ENCODE measurements at regions of chr1 and their contacts with region 1.

Region 1: GRCh38 chr1:119475866-119476439 is 31.1 kb upstream of the HSD3B1 start:
- DNase-seq: peak; percentile 50 to 64 (median 60)
- ATAC-seq: peak; percentile 97
- H3K4me3 ChIP-seq: no peak overlapping the region
- H3K27ac ChIP-seq: no peak overlapping the region
- H3K4me1 ChIP-seq: no peaks in the 10 kb centered on the region
- H3K27me3 ChIP-seq: no peaks in the 10 kb centered on the region
- CTCF ChIP-seq: peak; percentile 69 to 79 (median 78)
- EP300 ChIP-seq: no peak
- POLR2A ChIP-seq: no peak
- RAD21 ChIP-seq: peak; percentile 37 to 59; a peak in 3 of 4 replicates

Region 2: DNA sequence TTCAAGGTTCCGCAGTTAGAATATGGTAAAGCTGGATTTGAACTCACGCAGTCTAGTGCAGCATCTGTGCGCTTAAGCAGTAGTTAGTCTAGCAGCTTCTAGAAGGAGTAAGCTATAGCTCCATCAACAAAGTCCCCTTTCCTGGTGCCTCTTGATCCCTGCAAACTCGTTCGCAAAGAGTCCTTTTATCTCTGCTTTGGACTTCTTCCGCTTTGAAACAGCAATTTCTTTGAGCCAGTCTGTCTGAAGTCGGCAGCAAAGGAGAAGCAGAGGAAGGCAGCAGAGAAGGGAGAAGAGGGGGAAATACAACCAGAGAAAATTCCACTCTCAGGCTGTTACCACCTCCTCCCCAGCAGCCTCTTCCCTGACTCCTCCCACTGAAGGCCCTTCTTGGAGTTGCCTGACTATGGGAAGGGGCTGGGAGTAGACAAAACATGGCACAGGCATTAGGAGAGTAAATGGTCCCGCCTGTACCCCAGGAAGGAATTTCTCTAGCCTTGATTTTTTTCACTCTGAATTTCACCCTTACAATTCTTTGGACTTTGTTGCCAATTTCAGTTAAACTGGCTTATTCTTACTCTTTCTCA is 35.1 kb before region 1 on chr1:
- CTCF ChIA-PET with region 1: no interaction called
- POLR2A ChIA-PET with region 1: interaction called, 3 read pairs
- in situ Hi-C with region 1: no loop called
- intact Hi-C with region 1: loop called (anchors 5 kb)
- DNase-seq: no peak
- ATAC-seq: no peak
- H3K4me3 ChIP-seq: no peak overlapping the region
- H3K27ac ChIP-seq: no peak overlapping the region
- H3K4me1 ChIP-seq: no peaks in the 10 kb centered on the region
- H3K27me3 ChIP-seq: 0 out of 5 replicates have a peak, but pooled peaks cover 0 to 2% of the 10 kb centered on the region in 2 experiments
- CTCF ChIP-seq: no peak
- EP300 ChIP-seq: no peak
- POLR2A ChIP-seq: no peak
- RAD21 ChIP-seq: no peak

Region 3: GRCh38 chr1:119516678-119517077 is 40.7 kb after region 1 on chr1:
- CTCF ChIA-PET with region 1: no interaction called
- POLR2A ChIA-PET with region 1: no interaction called
- in situ Hi-C with region 1: no loop called
- intact Hi-C with region 1: no loop called
- DNase-seq: no peak
- ATAC-seq: no peak
- H3K4me3 ChIP-seq: no peak overlapping the region
- H3K27ac ChIP-seq: no peak overlapping the region
- H3K4me1 ChIP-seq: no peaks in the 10 kb centered on the region
- H3K27me3 ChIP-seq: no peaks in the 10 kb centered on the region
- CTCF ChIP-seq: no peak
- EP300 ChIP-seq: no peak
- POLR2A ChIP-seq: no peak
- RAD21 ChIP-seq: no peak

Region 4: DNA sequence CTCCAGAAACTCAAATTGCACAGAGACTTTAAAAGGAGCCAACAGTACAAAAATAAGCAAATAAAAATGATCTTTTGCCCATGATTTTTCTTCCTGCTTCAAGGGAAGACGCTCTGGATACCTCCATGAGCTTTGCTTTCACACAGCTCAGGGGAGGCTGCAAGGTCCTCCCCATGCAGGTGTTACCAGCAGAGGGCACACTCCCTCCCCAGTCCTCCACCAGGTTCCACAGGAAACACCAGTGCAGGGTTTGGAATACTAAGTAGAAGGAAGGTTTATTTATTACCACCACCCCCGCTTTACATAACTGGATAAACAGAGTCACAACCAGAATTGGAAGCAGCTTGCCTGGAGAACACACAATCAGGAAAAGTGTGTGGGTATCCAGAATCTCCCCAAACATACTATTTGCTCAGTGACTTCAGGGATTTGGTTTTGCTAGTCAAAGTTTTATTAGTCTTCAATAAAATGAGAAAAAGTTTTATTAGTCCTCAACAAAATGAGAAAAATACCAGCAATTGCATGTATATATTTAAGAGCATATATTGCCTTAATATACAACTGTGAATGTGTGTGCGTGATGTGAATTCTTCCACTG is 68.3 kb after region 1 on chr1:
- CTCF ChIA-PET with region 1: no interaction called
- POLR2A ChIA-PET with region 1: no interaction called
- in situ Hi-C with region 1: no loop called
- intact Hi-C with region 1: loop called (anchors 5 kb)
- DNase-seq: peak; percentile 16 to 41 (median 20)
- ATAC-seq: peak; percentile 91
- H3K4me3 ChIP-seq: no peak overlapping the region
- H3K27ac ChIP-seq: no peak overlapping the region
- H3K4me1 ChIP-seq: no peaks in the 10 kb centered on the region
- H3K27me3 ChIP-seq: no peaks in the 10 kb centered on the region
- CTCF ChIP-seq: peak; percentile 60 to 76 (median 60)
- EP300 ChIP-seq: no peak
- POLR2A ChIP-seq: no peak
- RAD21 ChIP-seq: 0 out of 4 replicates have a peak, but pooled peaks of 1 of the 2 experiments have one; percentile 16

Region 5: GRCh38 chr1:119603695-119604094 is 127.7 kb after region 1 on chr1:
- CTCF ChIA-PET with region 1: no interaction called
- POLR2A ChIA-PET with region 1: no interaction called
- in situ Hi-C with region 1: no loop called
- intact Hi-C with region 1: loop called (anchors 10 kb)
- DNase-seq: no peak
- ATAC-seq: no peak
- H3K4me3 ChIP-seq: no peak overlapping the region
- H3K27ac ChIP-seq: no peak overlapping the region
- H3K4me1 ChIP-seq: no peaks in the 10 kb centered on the region
- H3K27me3 ChIP-seq: peaks cover 5 to 16% of the 10 kb centered on the region in 2 experiments; a peak in 3 of 5 replicates
- CTCF ChIP-seq: no peak
- EP300 ChIP-seq: no peak
- POLR2A ChIP-seq: no peak
- RAD21 ChIP-seq: no peak

Region 6: GRCh38 chr1:119675349-119676345 is 199.7 kb after region 1 on chr1:
- CTCF ChIA-PET with region 1: no interaction called
- POLR2A ChIA-PET with region 1: no interaction called
- in situ Hi-C with region 1: no loop called
- intact Hi-C with region 1: loop called (anchors 10 kb)
- DNase-seq: peak; percentile 85 to 91 (median 86)
- ATAC-seq: peak; percentile 92
- H3K4me3 ChIP-seq: peak overlapping the region; percentile 28
- H3K27ac ChIP-seq: no peak overlapping the region
- H3K4me1 ChIP-seq: peaks cover 0 to 18% of the 10 kb centered on the region in 2 experiments; a peak in 3 of 5 replicates
- H3K27me3 ChIP-seq: no peaks in the 10 kb centered on the region
- CTCF ChIP-seq: peak; percentile 80 to 96 (median 90)
- EP300 ChIP-seq: no peak
- POLR2A ChIP-seq: no peak
- RAD21 ChIP-seq: peak; percentile 75 to 88

Measured in K562 (cell line).